ENCODE measurements at regions of chr2 and their contacts with region 1.

Region 1: GRCh38 chr2:95264624-95265023 is 9.6 kb upstream of the PROM2 start:
- DNase-seq: no peak
- H3K4me3 ChIP-seq: no peak overlapping the region
- H3K27ac ChIP-seq: no peak overlapping the region
- H3K4me1 ChIP-seq: peaks cover 19% of the 10 kb centered on the region
- H3K27me3 ChIP-seq: no peaks in the 10 kb centered on the region
- CTCF ChIP-seq: no peak

Region 2: GRCh38 chr2:95300450-95300849 is 35.8 kb after region 1 on chr2:
- CTCF ChIA-PET with region 1: no interaction called
- dilution Hi-C with region 1: loop called (anchors 5 kb)
- in situ Hi-C with region 1: no loop called
- intact Hi-C with region 1: no loop called
- DNase-seq: peak; percentile 71
- H3K4me3 ChIP-seq: no peak overlapping the region
- H3K27ac ChIP-seq: no peak overlapping the region
- H3K4me1 ChIP-seq: no peaks in the 10 kb centered on the region
- H3K27me3 ChIP-seq: peaks cover 5% of the 10 kb centered on the region
- CTCF ChIP-seq: no peak

Region 3: GRCh38 chr2:96024336-96025193 is 759.9 kb after region 1 on chr2:
- CTCF ChIA-PET with region 1: no interaction called
- dilution Hi-C with region 1: no loop called
- in situ Hi-C with region 1: no loop called
- intact Hi-C with region 1: no loop called
- DNase-seq: no peak
- H3K4me3 ChIP-seq: no peak overlapping the region
- H3K27ac ChIP-seq: no peak overlapping the region
- H3K4me1 ChIP-seq: no peaks in the 10 kb centered on the region
- H3K27me3 ChIP-seq: no peaks in the 10 kb centered on the region
- CTCF ChIP-seq: no peak